CD4-positive, alpha-beta T cell (primary cell): ENCODE measurements at regions of chr17 and their contacts with region 1.

Region 1: DNA sequence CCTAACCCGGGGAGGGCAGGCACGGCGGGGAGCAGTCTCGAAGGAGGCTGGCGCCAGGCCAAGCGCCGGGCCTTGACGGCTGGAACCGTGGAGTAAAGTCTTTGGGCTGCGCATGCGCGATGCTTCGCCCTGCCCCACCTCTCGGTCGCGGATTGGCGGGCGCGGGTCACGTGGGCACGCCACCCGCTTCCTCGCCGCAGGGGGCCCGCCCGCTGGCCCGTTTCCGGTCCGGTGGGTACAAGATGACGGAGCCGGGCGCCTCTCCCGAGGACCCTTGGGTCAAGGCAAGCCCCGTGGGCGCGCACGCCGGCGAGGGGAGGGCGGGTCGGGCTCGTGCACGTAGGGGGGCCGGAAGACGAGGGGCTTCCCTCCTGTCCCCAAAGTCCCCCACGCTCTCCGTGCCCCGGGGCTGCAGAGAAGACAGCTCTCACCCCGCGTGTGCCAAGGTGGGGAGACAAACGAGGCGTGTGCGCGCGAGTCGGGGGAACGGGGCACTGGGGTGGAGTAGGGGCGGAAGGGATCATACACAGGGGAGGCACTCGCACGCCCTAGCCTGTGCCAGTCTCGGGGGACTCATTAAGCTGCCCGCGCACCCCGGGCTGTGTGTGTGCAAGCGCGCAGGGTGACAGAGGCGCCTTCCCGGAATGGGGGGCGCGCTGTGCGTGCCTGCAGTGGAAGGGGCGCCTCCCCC is at the start of gene MLX:
- DNase-seq: peak; percentile 83 to 97 (median 90)
- ATAC-seq: peak; percentile 68
- H3K4me3 ChIP-seq: peak within 1 kb of the TSS; percentile 96
- H3K4me3 Mint-ChIP-seq: peak within 1 kb of the TSS; percentile 97
- H3K27ac ChIP-seq: peak within 1 kb of the TSS; percentile 83 to 86
- H3K27ac Mint-ChIP-seq: peak within 1 kb of the TSS; percentile 96
- H3K4me1 ChIP-seq: peaks cover 64% of the 10 kb centered on the region
- H3K4me1 Mint-ChIP-seq: peaks cover 42% of the 10 kb centered on the region
- H3K27me3 ChIP-seq: no peaks in the 10 kb centered on the region
- H3K27me3 Mint-ChIP-seq: no peaks in the 10 kb centered on the region
- CTCF ChIP-seq: no peak
- total RNA-seq, gene MLX: 29.2 to 32.1 TPM

Region 2: DNA sequence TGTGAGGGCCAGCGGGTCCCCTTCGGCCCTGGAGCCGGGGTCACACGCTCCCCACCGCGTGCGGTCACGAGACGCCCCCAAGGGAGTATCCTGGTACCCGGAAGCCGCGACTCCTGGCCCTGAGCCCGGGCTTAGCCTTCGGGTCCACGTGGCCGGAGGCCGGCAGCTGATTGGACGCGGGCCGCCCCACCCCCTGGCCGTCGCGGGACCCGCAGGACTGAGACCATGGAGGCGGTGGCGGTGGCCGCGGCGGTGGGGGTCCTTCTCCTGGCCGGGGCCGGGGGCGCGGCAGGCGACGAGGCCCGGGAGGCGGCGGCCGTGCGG is 31.0 kb before region 1 on chr17 and contains the start of gene NAGLU:
- CTCF ChIA-PET with region 1: no interaction called
- POLR2A ChIA-PET with region 1: interaction called, 6 read pairs
- intact Hi-C with region 1: loop called in 1 of 2 experiments (anchors 2 kb)
- DNase-seq: peak; percentile 48 to 86 (median 73)
- ATAC-seq: peak; percentile 68
- H3K4me3 ChIP-seq: peak within 1 kb of the TSS; percentile 64
- H3K4me3 Mint-ChIP-seq: peak within 1 kb of the TSS; percentile 91
- H3K27ac ChIP-seq: peak within 1 kb of the TSS in 1 of 2 donors; percentile 10
- H3K27ac Mint-ChIP-seq: peak within 1 kb of the TSS; percentile 71
- H3K4me1 ChIP-seq: peaks cover 45% of the 10 kb centered on the region
- H3K4me1 Mint-ChIP-seq: peaks cover 48% of the 10 kb centered on the region
- H3K27me3 ChIP-seq: no peaks in the 10 kb centered on the region
- H3K27me3 Mint-ChIP-seq: no peaks in the 10 kb centered on the region
- CTCF ChIP-seq: no peak
- total RNA-seq, gene NAGLU: 7.8 TPM

Region 3: DNA sequence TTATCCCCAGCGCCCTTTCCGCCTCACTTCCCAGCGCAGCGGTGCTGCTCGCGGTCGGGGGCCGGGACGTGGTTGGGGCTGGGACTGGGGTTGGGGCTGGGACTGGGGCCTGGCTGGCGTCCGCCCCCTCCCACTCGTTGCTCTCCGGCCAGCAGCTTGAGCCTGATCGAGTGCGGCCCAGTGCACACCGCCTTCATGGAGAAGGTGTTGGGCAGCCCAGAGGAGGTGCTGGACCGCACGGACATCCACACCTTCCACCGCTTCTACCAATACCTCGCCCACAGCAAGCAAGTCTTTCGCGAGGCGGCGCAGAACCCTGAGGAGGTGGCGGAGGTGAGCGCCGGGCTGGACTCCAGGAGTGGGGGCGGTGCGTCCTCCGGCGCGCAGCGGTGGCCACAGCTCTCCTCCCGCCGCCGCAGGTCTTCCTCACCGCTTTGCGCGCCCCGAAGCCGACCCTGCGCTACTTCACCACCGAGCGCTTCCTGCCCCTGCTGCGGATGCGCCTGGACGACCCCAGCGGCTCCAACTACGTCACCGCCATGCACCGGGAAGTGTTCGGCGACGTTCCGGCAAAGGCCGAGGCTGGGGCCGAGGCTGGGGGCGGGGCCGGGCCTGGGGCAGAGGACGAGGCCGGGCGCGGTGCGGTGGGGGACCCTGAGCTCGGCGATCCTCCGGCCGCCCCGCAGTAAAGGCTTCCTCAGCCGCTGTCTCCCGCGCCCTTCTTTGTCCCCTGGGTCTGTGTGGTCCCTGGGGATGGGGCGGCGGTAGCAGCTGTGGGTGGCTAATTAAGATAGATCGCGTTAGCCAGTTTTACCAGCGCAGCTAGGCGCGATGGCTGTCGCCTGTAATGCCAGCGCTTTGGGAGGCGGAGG is 12.5 kb before region 1 on chr17:
- CTCF ChIA-PET with region 1: no interaction called
- POLR2A ChIA-PET with region 1: interaction called, 10 read pairs
- intact Hi-C with region 1: no loop called
- DNase-seq: peak; percentile 40 to 89 (median 69)
- ATAC-seq: peak; percentile 87
- H3K4me3 ChIP-seq: peak overlapping the region; percentile 84
- H3K4me3 Mint-ChIP-seq: peak overlapping the region; percentile 93
- H3K27ac ChIP-seq: peak overlapping the region; percentile 83 to 87
- H3K27ac Mint-ChIP-seq: peak overlapping the region; percentile 90
- H3K4me1 ChIP-seq: peaks cover 26% of the 10 kb centered on the region
- H3K4me1 Mint-ChIP-seq: peaks cover 31% of the 10 kb centered on the region
- H3K27me3 ChIP-seq: no peaks in the 10 kb centered on the region
- H3K27me3 Mint-ChIP-seq: no peaks in the 10 kb centered on the region
- CTCF ChIP-seq: no peak

Region 4: DNA sequence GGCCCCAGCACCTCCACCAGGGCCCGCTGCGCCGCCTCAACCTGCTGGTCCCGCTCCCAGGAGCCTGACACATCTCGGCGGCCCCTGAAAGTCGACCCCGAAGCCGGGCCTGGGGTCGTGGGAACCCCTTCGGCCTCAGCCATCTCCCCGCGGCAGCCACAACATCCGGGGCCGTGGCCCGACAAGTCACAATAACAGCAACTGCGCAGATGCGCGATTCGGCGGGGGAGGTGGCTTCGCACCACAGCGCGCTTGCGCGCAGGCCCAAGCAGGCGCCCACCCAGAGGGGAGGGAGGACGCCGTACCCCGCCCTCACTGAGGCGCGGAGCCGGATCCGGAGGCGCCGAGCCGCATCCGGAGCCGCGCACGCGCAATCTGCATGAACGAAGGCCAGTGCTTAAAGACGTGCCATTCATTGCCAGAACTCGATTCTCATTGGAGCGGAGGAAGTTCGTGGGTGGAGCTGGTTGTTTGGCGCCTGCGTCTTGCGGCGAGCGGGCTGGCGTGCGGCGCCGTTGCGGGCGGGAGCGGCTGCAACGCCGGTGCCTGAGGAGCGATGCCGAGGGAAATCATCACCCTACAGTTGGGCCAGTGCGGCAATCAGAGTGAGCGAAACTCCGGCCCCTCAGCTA is 42.3 kb after region 1 on chr17 and contains the starts of genes RETREG3 and TUBG1:
- CTCF ChIA-PET with region 1: no interaction called
- POLR2A ChIA-PET with region 1: interaction called, 17 read pairs
- intact Hi-C with region 1: loop called in 1 of 2 experiments (anchors 2 kb)
- DNase-seq: peak; percentile 97 to 100 (median 99)
- ATAC-seq: peak; percentile 90
- H3K4me3 ChIP-seq: peak within 1 kb of the TSS; percentile 100
- H3K4me3 Mint-ChIP-seq: peak within 1 kb of the TSS; percentile 100
- H3K27ac ChIP-seq: peak within 1 kb of the TSS; percentile 92 to 96
- H3K27ac Mint-ChIP-seq: peak within 1 kb of the TSS; percentile 97
- H3K4me1 ChIP-seq: peaks cover 40% of the 10 kb centered on the region
- H3K4me1 Mint-ChIP-seq: peaks cover 51% of the 10 kb centered on the region
- H3K27me3 ChIP-seq: no peaks in the 10 kb centered on the region
- H3K27me3 Mint-ChIP-seq: no peaks in the 10 kb centered on the region
- CTCF ChIP-seq: no peak
- total RNA-seq, gene RETREG3: 46.7 to 48.7 TPM
- total RNA-seq, gene TUBG1: 7.3 to 8.5 TPM